Breast epithelium (tissue), 4 donors: ENCODE measurements at regions of chr17 and their contacts with region 1.

Region 1: DNA sequence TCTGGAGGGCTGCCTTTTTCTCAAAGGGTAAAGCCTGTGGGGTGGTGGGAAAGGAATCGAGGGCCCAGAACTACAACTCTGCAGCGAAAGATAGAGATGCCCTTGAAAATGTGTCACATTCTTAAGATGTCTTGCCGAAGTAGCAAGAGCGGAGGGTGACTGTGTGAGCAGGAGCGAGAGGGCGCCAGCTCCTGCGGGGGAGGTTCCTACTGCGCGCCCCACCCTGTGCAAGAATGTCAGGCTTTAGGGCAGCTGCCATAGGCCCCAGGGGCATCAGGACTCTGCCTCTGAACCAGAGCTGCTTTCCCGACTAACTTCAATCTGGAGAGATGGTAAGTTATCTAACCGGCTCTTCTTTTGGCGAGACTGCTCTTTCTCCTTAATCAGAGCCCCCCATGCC is 11.8 kb upstream of the ITGAE start:
- DNase-seq: no peak
- H3K4me3 ChIP-seq: no peak overlapping the region
- H3K27ac ChIP-seq: no peak overlapping the region
- H3K4me1 ChIP-seq: no peaks in the 10 kb centered on the region
- H3K27me3 ChIP-seq: no peaks in the 10 kb centered on the region
- CTCF ChIP-seq: no peak
- POLR2A ChIP-seq: no peak

Region 2: DNA sequence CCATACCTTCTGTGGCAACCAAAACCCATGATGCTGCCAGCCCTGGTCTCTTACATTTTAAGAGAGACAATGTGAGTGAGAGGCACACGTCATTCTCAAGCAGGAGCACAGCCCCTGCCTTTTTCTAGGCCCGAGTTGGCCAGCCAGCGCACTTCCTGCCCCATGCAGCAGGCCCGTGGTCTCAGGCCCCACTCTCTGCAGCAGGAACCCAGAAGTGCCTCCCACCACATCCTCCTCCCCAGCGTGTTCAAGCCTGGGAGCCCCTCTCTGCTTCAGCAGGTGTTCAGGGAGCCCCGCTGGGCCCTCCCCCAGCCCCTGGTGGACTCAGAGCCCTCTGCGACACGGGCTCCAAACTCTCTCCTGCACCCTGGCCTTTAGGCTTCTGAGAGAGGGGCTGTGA is 42.3 kb before region 1 on chr17:
- intact Hi-C with region 1: loop called (anchors 2 kb)
- DNase-seq: no peak
- H3K4me3 ChIP-seq: no peak overlapping the region
- H3K27ac ChIP-seq: no peak overlapping the region
- H3K4me1 ChIP-seq: no peaks in the 10 kb centered on the region
- H3K27me3 ChIP-seq: no peaks in the 10 kb centered on the region
- CTCF ChIP-seq: no peak
- POLR2A ChIP-seq: no peak